ENCODE measurements at regions of chr2 and their contacts with region 1.

Region 1: DNA sequence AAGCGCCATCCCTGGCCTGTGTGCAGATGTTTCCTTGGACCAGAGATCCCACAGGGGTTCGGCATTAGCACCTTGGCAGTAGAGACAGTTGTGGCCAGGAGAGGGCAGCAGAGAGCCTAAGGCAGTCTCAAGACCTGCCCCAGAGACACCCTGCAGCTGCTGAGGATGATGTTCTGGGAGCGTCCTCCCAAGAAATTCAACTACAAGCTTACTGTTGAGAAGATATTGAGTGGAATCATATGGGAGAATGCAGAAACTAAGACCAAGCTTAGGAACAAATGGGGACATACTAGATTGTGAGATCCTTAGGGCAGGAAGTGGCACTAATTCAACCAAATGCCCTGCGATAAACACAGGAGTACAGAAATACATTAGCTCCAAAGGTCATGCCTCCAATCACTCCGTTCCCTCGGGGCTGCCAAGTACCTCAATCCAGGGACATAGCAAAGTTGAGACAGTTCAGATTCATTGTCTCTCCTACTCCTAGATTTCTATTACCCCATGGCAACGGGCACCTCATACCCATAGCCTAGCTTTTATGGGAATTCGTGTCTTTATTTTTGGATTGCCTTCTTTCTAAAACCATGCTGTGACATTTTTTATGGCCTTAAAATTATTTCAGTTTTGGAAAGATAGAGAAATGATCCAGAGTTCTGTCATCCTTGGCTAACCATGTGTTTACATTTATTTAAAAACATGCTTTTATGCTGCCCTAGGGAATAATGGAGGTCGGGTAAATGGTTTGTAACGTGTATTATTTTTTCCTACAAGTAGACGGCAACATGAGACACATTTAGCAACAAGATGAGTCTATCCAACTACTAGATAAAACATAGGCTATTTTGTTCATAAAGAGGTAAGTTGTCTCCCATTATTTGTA is 2.2 kb upstream of the ERMN start:
- DNase-seq: peak; percentile 87
- H3K4me3 Mint-ChIP-seq: no peak overlapping the region
- H3K27ac Mint-ChIP-seq: no peak overlapping the region
- H3K4me1 Mint-ChIP-seq: peaks cover 42% of the 10 kb centered on the region
- H3K27me3 Mint-ChIP-seq: no peaks in the 10 kb centered on the region

Region 2: DNA sequence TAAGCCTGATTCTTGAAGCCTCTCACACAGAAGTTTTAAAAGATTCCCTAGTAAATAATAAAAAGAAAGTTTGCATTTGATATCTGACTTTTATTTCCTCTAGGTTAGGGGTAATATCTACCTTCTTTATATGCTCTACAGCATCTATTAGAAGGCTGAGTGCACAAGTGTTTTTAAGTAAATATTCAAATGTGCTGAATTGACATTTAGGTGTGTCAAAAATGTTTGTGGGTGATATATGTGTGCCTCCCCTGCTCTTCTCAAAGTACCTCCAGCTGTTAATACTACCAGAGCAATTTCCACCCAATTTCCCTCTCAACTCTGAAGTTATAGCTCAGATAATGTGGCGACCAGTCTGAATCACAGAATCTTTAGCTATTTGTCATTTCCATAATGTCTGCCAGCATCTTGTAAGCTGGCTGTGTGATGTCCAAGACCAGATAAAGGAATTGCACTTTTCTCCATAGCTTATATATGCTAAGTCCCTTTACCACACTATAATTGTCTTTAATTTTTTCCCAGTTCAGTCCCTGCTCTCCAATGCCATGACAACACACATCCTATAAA is 22.2 kb after region 1 on chr2:
- CTCF ChIA-PET with region 1: interaction called, 20 read pairs
- POLR2A ChIA-PET with region 1: interaction called, 4 read pairs
- DNase-seq: no peak
- H3K4me3 Mint-ChIP-seq: no peak overlapping the region
- H3K27ac Mint-ChIP-seq: no peak overlapping the region
- H3K4me1 Mint-ChIP-seq: no peaks in the 10 kb centered on the region
- H3K27me3 Mint-ChIP-seq: no peaks in the 10 kb centered on the region

Region 3: DNA sequence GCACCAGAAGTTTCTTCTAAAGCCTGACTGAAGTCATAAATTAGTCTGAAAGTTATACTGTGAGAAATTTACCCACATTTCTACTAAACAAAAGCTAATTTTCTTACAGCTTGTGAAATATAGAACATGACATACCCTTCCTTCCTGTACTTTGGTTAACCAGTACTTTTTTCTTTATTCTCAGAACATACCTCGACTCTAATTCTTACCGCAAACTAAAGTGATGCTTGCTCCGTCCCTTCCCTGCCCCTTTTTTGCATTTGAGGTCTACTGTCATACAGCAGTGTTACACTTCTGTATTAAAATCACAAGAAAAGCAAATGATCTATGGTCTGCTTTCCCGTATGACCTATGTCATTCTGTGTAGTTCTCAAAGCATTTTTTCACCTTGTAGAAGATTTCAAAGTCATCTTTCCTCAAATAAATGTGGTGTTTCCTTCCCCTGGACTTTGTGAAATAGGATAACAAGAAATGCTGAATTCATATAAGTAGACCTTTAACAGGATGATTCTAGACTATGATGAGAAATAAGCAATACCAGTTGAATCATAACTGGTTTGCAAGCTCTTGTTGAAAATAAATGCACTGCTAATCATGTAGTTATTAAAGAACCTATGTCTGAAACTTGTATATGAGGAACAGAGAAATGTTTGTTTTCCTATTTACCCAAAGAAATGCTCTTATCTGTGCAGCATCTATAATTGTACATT is 85.6 kb after region 1 on chr2:
- CTCF ChIA-PET with region 1: interaction called, 50 read pairs
- POLR2A ChIA-PET with region 1: interaction called, 37 read pairs
- DNase-seq: peak; percentile 69
- H3K4me3 Mint-ChIP-seq: peak overlapping the region; percentile 63
- H3K27ac Mint-ChIP-seq: peak overlapping the region; percentile 89
- H3K4me1 Mint-ChIP-seq: peaks cover 79% of the 10 kb centered on the region
- H3K27me3 Mint-ChIP-seq: no peaks in the 10 kb centered on the region

Region 4: GRCh38 chr2:157427003-157427921 is 99.4 kb after region 1 on chr2:
- CTCF ChIA-PET with region 1: interaction called, 12 read pairs
- POLR2A ChIA-PET with region 1: interaction called, 10 read pairs
- DNase-seq: no peak
- H3K4me3 Mint-ChIP-seq: no peak overlapping the region
- H3K27ac Mint-ChIP-seq: peak overlapping the region; percentile 69
- H3K4me1 Mint-ChIP-seq: peaks cover 82% of the 10 kb centered on the region
- H3K27me3 Mint-ChIP-seq: no peaks in the 10 kb centered on the region

Region 5: DNA sequence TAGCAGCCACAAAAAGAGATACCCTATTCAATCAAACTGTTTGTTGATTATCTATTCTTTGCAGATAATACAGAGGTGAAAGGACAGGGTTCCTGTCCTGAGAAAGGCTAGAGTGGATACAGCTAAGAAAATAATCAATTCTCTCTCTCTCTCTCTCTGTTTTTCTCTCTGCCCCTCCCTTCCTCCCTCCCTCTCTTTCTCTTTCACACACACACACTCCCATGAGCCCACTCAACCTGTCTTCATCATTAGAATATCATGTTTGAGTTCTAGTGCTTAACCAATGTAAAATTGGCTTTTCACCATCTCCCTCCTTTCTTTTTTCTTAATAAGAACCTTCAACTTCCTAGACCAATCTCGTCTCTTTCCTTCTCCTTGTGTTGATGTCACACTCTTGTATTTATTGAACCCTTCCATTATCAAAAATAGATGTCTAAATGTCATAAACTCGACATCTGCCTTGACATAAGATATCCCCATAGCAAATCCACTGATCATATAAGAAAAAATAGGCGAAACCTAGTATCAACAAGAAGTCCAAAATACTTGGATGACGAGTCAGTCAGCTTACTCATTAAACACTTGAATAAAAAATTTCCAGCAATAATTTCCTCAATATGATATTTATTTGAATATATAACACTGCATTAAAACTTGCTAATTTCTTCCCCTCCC is 158.9 kb after region 1 on chr2:
- CTCF ChIA-PET with region 1: interaction called, 24 read pairs
- POLR2A ChIA-PET with region 1: interaction called, 4 read pairs
- DNase-seq: no peak
- H3K4me3 Mint-ChIP-seq: peak overlapping the region; percentile 1
- H3K27ac Mint-ChIP-seq: no peak overlapping the region
- H3K4me1 Mint-ChIP-seq: peaks cover 69% of the 10 kb centered on the region
- H3K27me3 Mint-ChIP-seq: no peaks in the 10 kb centered on the region

Region 6: DNA sequence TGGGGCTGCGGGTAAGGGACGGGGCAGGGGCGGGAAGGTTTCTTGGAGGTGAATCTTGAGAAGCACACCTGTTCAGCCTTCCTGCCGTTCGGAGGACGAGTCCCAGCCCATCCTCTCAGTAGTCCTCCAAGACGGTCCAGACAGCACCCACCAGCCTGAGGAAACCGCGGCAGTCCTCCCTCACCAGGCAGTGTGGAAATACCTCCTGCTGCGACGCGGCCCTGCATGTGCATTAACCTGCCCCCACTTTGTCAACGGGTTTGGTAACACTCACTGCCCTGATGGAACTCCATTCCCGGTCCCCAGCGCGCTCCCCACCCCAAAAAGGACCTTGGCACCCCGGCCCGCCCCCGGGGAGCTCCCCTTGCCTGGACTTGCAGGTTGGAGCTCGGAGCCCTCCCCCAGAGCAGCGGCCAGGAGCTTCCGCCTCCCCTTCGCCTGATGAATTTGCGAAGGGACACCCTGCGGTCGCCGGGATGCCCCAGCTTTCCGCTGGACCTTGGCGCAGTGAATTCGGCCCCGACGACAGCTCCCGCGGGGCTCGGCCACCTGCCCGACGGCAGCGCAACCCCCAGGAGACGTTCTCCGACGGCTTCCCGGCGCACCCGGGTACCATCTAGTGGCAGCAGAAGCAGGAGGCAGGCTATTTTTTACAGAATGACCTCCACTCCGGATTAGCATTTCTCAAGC is 269.3 kb after region 1 on chr2:
- CTCF ChIA-PET with region 1: interaction called, 10 read pairs
- POLR2A ChIA-PET with region 1: no interaction called
- DNase-seq: peak; percentile 58
- H3K4me3 Mint-ChIP-seq: peak overlapping the region; percentile 46
- H3K27ac Mint-ChIP-seq: no peak overlapping the region
- H3K4me1 Mint-ChIP-seq: peaks cover 8% of the 10 kb centered on the region
- H3K27me3 Mint-ChIP-seq: peaks cover 11% of the 10 kb centered on the region

Measured in activated CD4-positive, alpha-beta memory T cell treated with anti-CD3 and anti-CD28 coated beads, Interleukin-2, amount 10 ng/mL, durations not matched to agents 7 days and 5 days (primary cell).